Mammary epithelial cell (primary cell): ENCODE measurements at regions of chr19 and their contacts with region 1.

Region 1: DNA sequence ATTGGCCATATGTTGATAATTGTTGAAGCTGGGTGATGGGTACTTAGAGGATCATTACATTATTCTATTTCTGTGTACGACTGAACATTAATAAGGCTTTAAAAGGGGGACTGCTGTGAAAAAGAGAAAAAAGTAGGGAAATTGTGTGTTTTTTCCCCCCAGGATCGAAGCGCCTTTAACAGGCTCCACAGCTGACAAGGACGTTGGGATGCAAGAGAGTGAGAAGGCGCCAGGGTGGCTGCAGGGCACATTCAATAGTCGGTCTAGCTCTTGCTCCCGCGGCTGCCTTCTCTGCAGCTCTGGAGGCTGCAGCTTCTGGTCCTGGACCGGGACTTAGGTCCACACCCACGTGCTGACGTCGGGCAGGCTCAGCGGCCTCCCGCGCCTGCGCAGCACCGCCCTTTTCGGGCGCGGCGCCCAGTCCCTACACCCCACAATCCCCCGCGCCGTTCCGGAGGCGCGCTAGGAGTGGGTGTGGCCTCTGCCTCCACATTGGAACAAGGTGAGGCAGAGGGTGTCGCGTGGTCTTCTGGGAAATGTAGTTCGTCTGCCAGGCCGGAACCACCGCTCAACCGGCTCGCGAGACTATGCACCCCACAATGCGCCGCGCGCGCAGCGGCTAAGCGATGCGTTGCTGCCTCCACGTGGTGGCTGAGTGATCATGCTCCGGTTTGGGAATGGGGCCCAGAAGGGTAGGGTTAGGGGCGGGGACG is 4.9 kb upstream of the LRFN3 start:
- DNase-seq: peak; percentile 99
- H3K4me3 ChIP-seq: peak overlapping the region; percentile 23 to 43 (median 37)
- H3K27ac ChIP-seq: no peak overlapping the region
- H3K4me1 ChIP-seq: peaks cover 8% of the 10 kb centered on the region
- H3K27me3 ChIP-seq: no peaks in the 10 kb centered on the region
- CTCF ChIP-seq: peak; percentile 77 to 97

Region 2: GRCh38 chr19:35748106-35749020 is 183.0 kb before region 1 on chr19 and contains the start of gene LIN37:
- CTCF ChIA-PET with region 1: interaction called, 4 read pairs
- dilution Hi-C with region 1: no loop called
- in situ Hi-C with region 1: no loop called
- intact Hi-C with region 1: loop called (anchors 1 kb)
- DNase-seq: peak; percentile 99
- H3K4me3 ChIP-seq: peak within 1 kb of the TSS; percentile 68 to 97 (median 86)
- H3K27ac ChIP-seq: peak within 1 kb of the TSS; percentile 64
- H3K4me1 ChIP-seq: peaks cover 13% of the 10 kb centered on the region
- H3K27me3 ChIP-seq: no peaks in the 10 kb centered on the region
- CTCF ChIP-seq: peak in 1 of 2 donors; percentile 7
- total RNA-seq, gene LIN37: 13.6 to 14.5 TPM

Region 3: DNA sequence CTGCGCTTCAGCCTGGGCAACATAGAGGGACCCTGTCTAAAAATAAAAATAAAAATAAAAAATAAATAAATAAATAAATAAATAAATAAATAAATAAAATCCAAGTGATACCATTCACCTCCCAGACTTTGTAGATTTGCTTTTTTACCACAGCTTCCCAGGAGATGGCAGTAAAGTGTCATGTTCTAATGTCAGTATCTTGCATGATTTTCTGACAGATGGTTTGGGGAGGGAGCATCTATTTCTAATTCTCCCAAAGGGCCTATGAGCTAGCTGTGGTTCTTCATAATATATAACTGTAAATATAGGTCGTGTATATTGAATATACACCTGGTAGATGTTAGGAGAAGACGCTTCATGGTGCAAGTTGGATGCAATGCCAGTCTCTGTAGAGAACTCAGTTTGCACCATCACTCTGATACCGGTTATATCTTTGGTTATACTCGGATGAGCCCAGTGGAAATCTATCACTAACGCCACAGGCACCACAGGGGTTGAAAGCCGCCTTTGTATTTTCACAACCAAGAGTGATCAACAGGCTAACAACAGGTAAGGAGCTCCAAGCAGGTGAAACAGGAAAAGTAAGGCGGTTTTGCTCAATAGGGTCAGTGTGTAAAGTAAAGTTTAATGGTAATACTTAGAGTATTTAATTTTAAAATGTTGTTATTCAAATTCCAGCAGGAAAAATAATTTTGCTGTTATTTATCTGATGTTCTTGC is 49.0 kb before region 1 on chr19:
- CTCF ChIA-PET with region 1: interaction called, 11 read pairs
- dilution Hi-C with region 1: no loop called
- in situ Hi-C with region 1: loop called (anchors 5 to 10 kb)
- intact Hi-C with region 1: loop called (anchors 1 kb)
- DNase-seq: peak; percentile 66
- H3K4me3 ChIP-seq: no peak overlapping the region
- H3K27ac ChIP-seq: no peak overlapping the region
- H3K4me1 ChIP-seq: no peaks in the 10 kb centered on the region
- H3K27me3 ChIP-seq: no peaks in the 10 kb centered on the region
- CTCF ChIP-seq: peak; percentile 39 to 58

Region 4: GRCh38 chr19:35949131-35949530 is 17.8 kb after region 1 on chr19:
- CTCF ChIA-PET with region 1: no interaction called
- dilution Hi-C with region 1: no loop called
- in situ Hi-C with region 1: no loop called
- intact Hi-C with region 1: no loop called
- DNase-seq: no peak
- H3K4me3 ChIP-seq: no peak overlapping the region
- H3K27ac ChIP-seq: no peak overlapping the region
- H3K4me1 ChIP-seq: no peaks in the 10 kb centered on the region
- H3K27me3 ChIP-seq: no peaks in the 10 kb centered on the region
- CTCF ChIP-seq: no peak

Region 5: GRCh38 chr19:36169084-36169760 is 237.9 kb after region 1 on chr19:
- CTCF ChIA-PET with region 1: no interaction called
- dilution Hi-C with region 1: no loop called
- in situ Hi-C with region 1: no loop called
- intact Hi-C with region 1: loop called (anchors 10 kb)
- DNase-seq: no peak
- H3K4me3 ChIP-seq: no peak overlapping the region
- H3K27ac ChIP-seq: no peak overlapping the region
- H3K4me1 ChIP-seq: no peaks in the 10 kb centered on the region
- H3K27me3 ChIP-seq: no peaks in the 10 kb centered on the region
- CTCF ChIP-seq: no peak